ENCODE measurements at regions of chr1 and their contacts with region 1.

Region 1: DNA sequence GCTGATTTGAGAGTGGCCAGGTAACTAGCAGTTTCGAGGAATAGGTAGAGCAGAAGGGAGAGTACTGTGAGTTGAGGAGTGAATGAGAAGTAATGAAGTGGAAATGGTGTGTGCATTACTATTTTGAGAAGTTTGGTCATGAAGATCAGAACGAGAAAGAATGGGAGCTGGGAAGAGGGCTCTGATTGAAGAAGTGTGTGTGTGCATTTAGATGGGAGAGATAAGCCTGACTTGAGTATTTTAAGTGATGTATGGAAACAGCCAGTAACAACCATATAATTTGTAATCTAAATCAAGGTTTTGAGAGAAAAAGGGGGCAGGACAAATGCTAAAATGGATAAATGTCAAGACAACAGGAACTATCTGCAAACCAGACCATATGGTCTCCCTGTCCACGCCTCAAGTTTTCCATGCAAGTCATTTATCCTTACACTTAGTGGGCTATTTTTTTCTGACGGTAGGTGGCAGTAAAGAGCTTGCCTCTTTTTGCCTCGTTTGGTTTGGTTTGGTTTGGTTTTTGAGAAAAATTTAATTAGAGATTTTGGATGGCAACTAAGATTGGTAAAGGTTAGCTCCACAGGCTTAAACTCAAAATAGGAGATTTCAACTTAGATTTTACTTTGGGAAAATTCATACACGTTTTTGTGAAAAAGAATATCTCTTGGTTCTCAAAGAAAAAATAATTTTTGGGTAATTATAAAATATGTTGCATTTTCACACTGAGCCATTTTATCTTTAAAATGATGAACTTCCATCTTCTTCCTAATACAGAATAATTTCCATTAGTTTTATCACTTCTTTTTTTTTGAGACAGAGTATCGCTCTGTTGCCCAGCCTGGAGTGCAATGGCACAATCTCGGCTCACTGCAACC is 9.5 kb upstream of the B3GALNT2 start:
- DNase-seq: peak in 1 of 2 donors; percentile 62
- ATAC-seq: peak in 2 of 8 donors; percentile 25 to 58
- H3K4me3 ChIP-seq: no peak overlapping the region
- H3K27ac ChIP-seq: no peak overlapping the region
- H3K4me1 ChIP-seq: no peaks in the 10 kb centered on the region
- H3K27me3 ChIP-seq: no peaks in the 10 kb centered on the region
- CTCF ChIP-seq: peak; percentile 83 to 95 (median 91)

Region 2: DNA sequence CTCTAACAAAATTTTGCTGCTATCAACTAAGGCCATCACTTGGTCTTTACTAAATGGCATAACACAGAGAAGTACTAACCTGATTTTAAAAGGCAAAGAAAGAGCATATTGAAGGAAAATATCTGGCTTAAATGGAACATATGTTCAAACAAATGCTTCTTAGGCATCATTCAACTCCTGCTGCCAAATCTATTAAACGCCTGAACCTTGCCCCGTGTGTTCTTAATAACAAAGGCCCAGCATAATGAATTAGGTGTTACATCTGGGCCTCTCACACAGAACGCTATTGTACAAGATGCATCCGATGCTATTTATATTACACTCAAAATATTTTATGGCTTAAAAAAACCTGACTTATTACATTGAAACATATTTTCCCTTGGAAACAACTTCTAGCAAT is 57.9 kb before region 1 on chr1:
- intact Hi-C with region 1: no loop called
- DNase-seq: no peak
- ATAC-seq: no peak
- H3K4me3 ChIP-seq: no peak overlapping the region
- H3K27ac ChIP-seq: no peak overlapping the region
- H3K4me1 ChIP-seq: no peaks in the 10 kb centered on the region
- H3K27me3 ChIP-seq: no peaks in the 10 kb centered on the region
- CTCF ChIP-seq: no peak

Region 3: GRCh38 chr1:235783148-235783776 is 269.5 kb after region 1 on chr1:
- intact Hi-C with region 1: loop called (anchors 2 to 10 kb)
- DNase-seq: no peak
- ATAC-seq: no peak
- H3K4me3 ChIP-seq: no peak overlapping the region
- H3K27ac ChIP-seq: no peak overlapping the region
- H3K4me1 ChIP-seq: no peaks in the 10 kb centered on the region
- H3K27me3 ChIP-seq: no peaks in the 10 kb centered on the region
- CTCF ChIP-seq: peak; percentile 18 to 70 (median 55)

Region 4: DNA sequence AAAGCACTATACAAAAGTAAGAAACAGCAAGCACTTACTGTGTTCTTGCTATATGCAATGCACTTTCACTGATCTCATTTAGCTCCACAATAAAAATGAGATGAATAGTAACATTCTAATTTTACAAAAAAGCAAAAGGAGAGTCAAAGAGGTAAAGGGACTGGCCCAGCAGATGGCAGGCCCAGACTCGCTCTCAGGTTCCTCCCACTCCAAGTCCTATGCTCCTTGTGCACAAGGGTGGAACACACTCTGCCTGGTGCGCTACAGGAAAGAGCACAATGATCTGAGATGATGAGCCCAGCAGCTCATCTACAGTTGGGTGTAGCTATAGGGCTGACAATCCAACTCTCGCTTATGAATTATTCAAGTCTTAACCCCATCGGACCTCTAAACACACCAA is 447.1 kb after region 1 on chr1:
- intact Hi-C with region 1: loop called in 1 of 10 experiments (anchors 10 kb)
- DNase-seq: no peak
- ATAC-seq: no peak
- H3K4me3 ChIP-seq: no peak overlapping the region
- H3K27ac ChIP-seq: no peak overlapping the region
- H3K4me1 ChIP-seq: no peaks in the 10 kb centered on the region
- H3K27me3 ChIP-seq: no peaks in the 10 kb centered on the region
- CTCF ChIP-seq: no peak

Measured in heart right ventricle (tissue), 16 donors.